Psoas muscle (tissue), 8 donors: ENCODE measurements at regions of chr13 and their contacts with region 1.

Region 1: DNA sequence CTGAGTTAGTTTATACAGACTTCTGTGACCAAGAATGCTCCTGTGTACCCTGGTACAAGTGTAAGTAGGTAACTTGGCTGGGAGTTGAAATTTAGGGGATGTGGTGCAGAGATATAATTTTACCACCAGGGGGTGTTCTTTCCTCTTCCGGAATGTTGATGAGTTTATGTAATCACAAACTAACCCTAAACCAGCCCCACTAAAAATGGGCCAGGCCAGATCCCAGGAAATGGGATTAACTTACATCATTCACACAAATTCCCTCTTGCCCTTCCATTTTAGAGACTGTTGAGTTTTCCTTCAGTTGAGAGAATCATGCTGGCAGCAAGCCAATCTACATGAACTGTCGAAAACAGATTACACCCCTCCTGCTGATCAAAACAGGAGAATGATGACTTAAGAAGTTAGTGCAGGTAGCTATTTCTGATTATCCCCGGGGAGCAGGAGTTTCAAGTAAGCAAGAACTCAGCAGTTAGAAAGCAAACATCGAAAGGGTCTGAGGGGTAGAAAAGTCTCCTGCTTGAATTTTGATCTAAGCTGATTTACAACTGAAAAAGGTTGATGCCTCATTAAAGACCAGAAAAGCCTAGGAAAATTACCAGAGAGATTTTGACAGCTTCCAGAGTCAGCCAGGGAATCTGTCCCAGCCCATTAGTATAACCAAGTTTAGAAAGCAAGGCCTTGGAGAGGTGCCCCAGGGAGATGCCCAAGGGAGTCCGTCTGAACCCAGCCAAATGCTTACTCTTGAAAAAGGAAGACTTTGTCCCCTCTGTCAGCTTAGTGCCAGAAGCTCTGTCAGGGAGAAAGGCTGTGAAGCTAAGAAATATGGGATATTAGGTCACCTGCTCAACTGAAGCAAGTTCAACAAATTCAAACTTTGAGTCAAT is 32.3 kb upstream of the MED4 start:
- DNase-seq: peak; percentile 60 to 85
- ATAC-seq: peak; percentile 74 to 92 (median 82)
- H3K4me3 ChIP-seq: no peak overlapping the region
- H3K27ac ChIP-seq: peak overlapping the region; percentile 68
- H3K4me1 ChIP-seq: peaks cover 17% of the 10 kb centered on the region
- H3K27me3 ChIP-seq: no peaks in the 10 kb centered on the region
- CTCF ChIP-seq: peak; percentile 72

Region 2: GRCh38 chr13:48194379-48194754 is 67.2 kb after region 1 on chr13:
- intact Hi-C with region 1: no loop called
- DNase-seq: no peak
- ATAC-seq: no peak
- H3K4me3 ChIP-seq: no peak overlapping the region
- H3K27ac ChIP-seq: no peak overlapping the region
- H3K4me1 ChIP-seq: no peaks in the 10 kb centered on the region
- H3K27me3 ChIP-seq: no peaks in the 10 kb centered on the region
- CTCF ChIP-seq: no peak

Region 3: DNA sequence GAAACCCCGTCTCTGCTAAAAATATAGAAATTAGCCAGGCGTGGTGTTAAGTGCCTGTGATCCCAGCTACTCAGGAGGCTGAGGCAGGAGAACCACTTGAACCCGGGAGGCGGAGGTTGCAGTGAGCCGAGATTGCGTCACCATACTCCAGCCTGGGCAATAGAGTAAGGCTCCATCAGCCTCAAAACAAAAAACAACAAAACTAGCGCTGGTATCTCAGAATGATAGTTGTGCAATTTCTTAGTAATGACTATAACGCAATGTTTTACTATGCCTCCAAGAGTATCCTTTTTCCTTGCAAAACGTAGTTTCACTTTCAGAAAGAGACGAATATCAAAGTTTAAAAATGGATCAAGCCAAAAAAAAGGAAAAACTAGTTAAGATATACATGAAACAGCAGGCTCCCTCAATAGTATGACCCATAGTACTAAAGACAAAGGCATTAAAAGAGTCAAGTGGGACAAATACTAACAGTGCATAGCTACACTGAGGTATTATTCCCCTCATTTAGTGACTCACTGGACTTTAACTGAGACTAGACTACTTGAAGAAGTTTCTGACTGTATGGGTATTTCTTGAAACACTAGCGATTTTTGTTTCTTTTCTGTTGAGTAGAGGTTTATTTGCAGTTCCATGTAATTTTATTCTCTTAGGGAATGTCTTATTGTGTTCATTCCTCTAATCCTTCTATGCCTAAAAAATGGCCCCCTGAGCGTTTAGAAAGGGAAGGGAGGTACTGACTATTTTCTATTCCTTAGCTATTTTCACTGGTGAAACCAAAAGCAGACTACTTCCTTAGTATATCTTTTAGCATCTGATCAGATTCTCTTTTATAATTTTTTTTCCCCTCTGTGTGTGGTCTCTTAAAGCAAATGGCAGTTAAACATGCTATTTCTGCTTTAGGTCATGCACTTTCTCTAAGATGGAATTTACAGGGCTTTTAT is 95.4 kb after region 1 on chr13:
- intact Hi-C with region 1: loop called in 1 of 2 experiments (anchors 10 kb)
- DNase-seq: peak; percentile 39 to 67
- ATAC-seq: peak in 2 of 4 donors; percentile 28 to 81
- H3K4me3 ChIP-seq: peak overlapping the region; percentile 52
- H3K27ac ChIP-seq: peak overlapping the region; percentile 64
- H3K4me1 ChIP-seq: no peaks in the 10 kb centered on the region
- H3K27me3 ChIP-seq: no peaks in the 10 kb centered on the region
- CTCF ChIP-seq: no peak

Region 4: DNA sequence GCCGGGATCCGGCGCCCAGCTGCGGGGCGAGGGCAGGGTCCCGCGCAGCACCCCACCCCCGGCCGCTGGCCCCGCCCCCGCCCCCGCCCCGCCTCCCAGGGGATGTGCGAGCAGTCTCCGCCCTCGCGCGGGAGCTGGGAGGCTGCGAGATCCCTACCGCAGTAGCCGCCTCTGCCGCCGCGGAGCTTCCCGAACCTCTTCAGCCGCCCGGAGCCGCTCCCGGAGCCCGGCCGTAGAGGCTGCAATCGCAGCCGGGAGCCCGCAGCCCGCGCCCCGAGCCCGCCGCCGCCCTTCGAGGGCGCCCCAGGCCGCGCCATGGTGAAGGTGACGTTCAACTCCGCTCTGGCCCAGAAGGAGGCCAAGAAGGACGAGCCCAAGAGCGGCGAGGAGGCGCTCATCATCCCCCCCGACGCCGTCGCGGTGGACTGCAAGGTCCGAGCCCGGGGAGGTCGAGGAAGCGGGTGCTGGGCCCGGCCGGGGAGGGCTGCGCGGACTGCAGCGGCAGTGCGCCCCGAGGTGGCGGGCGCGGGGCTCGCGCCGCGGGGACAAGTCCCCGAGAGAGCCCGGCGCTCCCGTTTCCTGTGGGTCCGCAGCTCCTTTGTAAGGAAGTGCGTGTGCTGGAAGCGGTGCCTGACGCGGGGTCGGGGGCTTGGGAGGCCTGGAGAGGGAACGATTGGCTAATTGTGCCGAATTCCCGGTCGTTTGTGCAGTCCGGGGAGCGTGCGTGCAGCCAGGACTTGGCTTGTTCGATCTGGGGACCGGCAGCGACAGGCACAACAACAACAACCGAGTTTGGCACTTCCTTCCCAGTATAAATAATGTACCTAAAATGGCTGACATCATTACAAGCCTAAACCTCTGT is 106.1 kb after region 1 on chr13 and contains the start of gene ITM2B:
- intact Hi-C with region 1: loop called (anchors 5 to 10 kb)
- DNase-seq: peak; percentile 78 to 88
- ATAC-seq: peak; percentile 80 to 87 (median 82)
- H3K4me3 ChIP-seq: peak within 1 kb of the TSS; percentile 97
- H3K27ac ChIP-seq: peak within 1 kb of the TSS; percentile 99
- H3K4me1 ChIP-seq: peaks cover 30% of the 10 kb centered on the region
- H3K27me3 ChIP-seq: no peaks in the 10 kb centered on the region
- CTCF ChIP-seq: peak; percentile 52
- total RNA-seq, gene ITM2B: 122 to 219 (median 171) TPM

Region 5: DNA sequence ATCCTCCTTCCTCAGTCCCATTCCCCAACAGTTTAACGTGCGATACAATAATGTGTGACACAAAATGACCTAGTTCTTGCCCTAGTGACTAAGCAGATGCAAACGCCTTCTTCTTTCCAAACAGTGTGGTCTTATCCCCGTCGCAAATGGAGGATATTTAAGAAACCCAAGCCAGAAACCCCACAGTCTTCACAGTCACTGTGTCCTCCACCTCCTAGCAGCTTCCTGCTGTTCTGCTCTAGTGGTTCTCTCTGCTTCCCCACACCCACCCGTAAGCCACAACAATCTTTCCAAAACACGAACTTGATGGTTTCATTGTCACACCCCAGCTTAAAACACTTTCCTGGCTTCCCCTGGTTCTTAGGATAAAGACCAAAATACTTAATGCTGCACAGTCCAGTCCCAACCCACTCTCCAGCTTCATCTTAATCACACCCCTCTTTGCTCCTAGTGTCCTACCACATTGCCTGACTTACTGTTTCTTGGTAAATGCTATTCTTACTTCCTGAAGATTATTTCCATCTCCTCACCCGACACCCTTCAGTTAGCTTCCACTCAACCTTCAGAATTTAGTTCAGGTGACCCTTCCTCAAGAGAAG is 138.1 kb after region 1 on chr13:
- intact Hi-C with region 1: no loop called
- DNase-seq: no peak
- ATAC-seq: peak in 3 of 4 donors; percentile 26 to 32 (median 28)
- H3K4me3 ChIP-seq: no peak overlapping the region
- H3K27ac ChIP-seq: peak overlapping the region; percentile 30
- H3K4me1 ChIP-seq: peaks cover 16% of the 10 kb centered on the region
- H3K27me3 ChIP-seq: no peaks in the 10 kb centered on the region
- CTCF ChIP-seq: no peak

Region 6: GRCh38 chr13:48303359-48304142 is 176.4 kb after region 1 on chr13 and contains the start of gene RB1:
- intact Hi-C with region 1: loop called (anchors 5 to 10 kb)
- DNase-seq: peak; percentile 96 to 97
- ATAC-seq: peak; percentile 94 to 96 (median 94)
- H3K4me3 ChIP-seq: peak within 1 kb of the TSS; percentile 97
- H3K27ac ChIP-seq: peak within 1 kb of the TSS; percentile 100
- H3K4me1 ChIP-seq: peaks cover 14% of the 10 kb centered on the region
- H3K27me3 ChIP-seq: no peaks in the 10 kb centered on the region
- CTCF ChIP-seq: no peak
- total RNA-seq, gene RB1: 23.7 to 35.6 (median 30.7) TPM

Region 7: GRCh38 chr13:48769107-48769704 is 642.0 kb after region 1 on chr13:
- intact Hi-C with region 1: loop called in 1 of 2 experiments (anchors 2 kb)
- DNase-seq: peak in 1 of 2 donors; percentile 31
- ATAC-seq: peak; percentile 93 to 100 (median 98)
- H3K4me3 ChIP-seq: no peak overlapping the region
- H3K27ac ChIP-seq: no peak overlapping the region
- H3K4me1 ChIP-seq: no peaks in the 10 kb centered on the region
- H3K27me3 ChIP-seq: peaks cover 0 to under 1% (median 0%) of the 10 kb centered on the region in 3 donors
- CTCF ChIP-seq: peak; percentile 96